A549 (cell line): ENCODE measurements at regions of chr4 and their contacts with region 1.

Region 1: GRCh38 chr4:127732613-127733328 is 2.6 kb downstream of the SLC25A31 start:
- DNase-seq: peak; percentile 33 to 38
- ATAC-seq: peak; percentile 85 to 94
- H3K4me3 ChIP-seq: no peak overlapping the region
- H3K27ac ChIP-seq: no peak overlapping the region
- H3K4me1 ChIP-seq: no peaks in the 10 kb centered on the region
- CTCF ChIP-seq: peak; percentile 60
- EP300 ChIP-seq: no peak
- POLR2A ChIP-seq: no peak
- RAD21 ChIP-seq: peak; percentile 74 to 77

Region 2: GRCh38 chr4:127347936-127348335 is 384.8 kb before region 1 on chr4:
- CTCF ChIA-PET with region 1: no interaction called
- POLR2A ChIA-PET with region 1: no interaction called
- DNase-seq: no peak
- ATAC-seq: no peak
- H3K4me3 ChIP-seq: no peak overlapping the region
- H3K27ac ChIP-seq: no peak overlapping the region
- H3K4me1 ChIP-seq: no peaks in the 10 kb centered on the region
- CTCF ChIP-seq: no peak
- EP300 ChIP-seq: no peak
- POLR2A ChIP-seq: no peak
- RAD21 ChIP-seq: no peak

Region 3: DNA sequence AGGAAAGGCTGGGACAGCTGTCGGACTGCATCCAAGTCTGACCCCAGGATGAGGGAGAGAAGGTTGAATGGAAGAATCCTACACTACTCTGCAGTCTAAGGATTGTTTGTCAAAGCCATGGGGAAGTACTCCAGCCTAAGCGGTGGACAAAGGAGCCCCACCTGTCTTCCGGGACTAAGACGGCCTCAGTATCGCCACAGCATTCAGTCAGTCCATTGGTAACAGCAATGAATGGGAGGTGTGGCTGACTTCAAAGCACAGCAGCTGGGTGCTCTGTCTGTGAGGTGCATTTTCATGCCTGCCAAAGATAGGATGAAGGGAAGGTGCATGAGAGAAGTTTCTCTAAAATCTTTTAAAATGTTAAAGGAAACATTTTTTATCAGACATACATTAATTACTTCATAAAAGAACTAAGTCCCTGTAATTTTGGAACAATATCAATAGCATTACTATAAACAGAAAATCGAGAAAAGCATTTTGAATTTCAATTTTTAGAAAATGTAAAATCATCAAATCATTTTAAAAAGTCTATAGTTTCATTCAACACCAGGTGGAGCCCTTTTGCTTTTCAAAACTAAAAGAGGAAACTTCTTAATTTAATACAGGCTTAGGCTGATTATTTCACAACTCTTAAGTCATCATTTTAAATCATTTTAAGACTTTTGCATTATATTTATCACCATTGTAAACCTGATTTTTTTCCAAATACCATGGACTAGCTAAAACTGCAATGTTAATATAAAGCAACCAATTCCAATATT is 127.6 kb before region 1 on chr4:
- CTCF ChIA-PET with region 1: interaction called, 180 read pairs
- POLR2A ChIA-PET with region 1: no interaction called
- DNase-seq: peak in 1 of 2 experiments; percentile 20
- ATAC-seq: peak; percentile 30 to 47; a peak in 3 of 6 replicates
- H3K4me3 ChIP-seq: no peak overlapping the region
- H3K27ac ChIP-seq: no peak overlapping the region
- H3K4me1 ChIP-seq: no peaks in the 10 kb centered on the region
- CTCF ChIP-seq: peak; percentile 62; the same call in 2 of the 3 replicates
- EP300 ChIP-seq: no peak
- POLR2A ChIP-seq: no peak
- RAD21 ChIP-seq: peak; percentile 64 to 75

Region 4: GRCh38 chr4:127616898-127617297 is 115.9 kb before region 1 on chr4:
- CTCF ChIA-PET with region 1: interaction called, 25 read pairs
- POLR2A ChIA-PET with region 1: no interaction called
- DNase-seq: no peak
- ATAC-seq: no peak
- H3K4me3 ChIP-seq: no peak overlapping the region
- H3K27ac ChIP-seq: no peak overlapping the region
- H3K4me1 ChIP-seq: no peaks in the 10 kb centered on the region
- CTCF ChIP-seq: no peak
- EP300 ChIP-seq: no peak
- POLR2A ChIP-seq: no peak
- RAD21 ChIP-seq: no peak

Region 5: DNA sequence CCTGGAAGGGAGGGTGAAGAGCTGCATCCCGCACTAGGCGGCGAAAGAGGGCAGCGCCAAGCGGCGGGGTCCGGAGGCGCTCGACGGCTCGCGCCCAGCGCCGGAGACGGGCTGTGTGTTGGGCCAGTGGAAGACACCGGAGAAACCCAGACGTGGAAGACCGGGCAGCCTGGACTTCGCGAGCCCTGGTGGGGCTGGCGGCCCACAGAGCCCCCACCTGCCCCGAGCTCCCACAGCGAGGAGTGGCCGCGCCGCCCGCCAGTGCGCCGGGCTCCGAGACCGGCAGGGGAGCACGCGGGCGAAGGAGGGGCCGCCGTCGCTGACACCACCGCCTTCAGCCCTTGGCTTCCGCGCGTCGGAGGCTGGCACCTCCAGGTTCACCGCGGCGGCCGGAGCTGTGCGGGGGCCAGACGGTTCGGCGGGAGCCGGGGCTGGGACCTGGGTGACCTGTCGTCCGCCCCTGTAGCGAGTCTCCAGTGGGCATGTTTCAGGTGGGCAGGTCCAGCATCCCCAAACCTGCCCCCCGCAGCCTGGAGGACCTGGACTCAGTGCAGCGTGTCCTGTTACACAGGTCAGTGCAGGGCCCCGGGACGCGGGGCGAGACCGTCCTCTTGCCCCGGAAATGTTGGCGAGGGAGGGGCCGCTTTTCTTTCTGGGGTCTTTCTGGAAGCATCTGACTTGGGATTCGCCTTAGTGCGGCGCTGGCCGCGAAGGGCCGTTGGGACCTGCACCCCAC is 109.7 kb before region 1 on chr4:
- CTCF ChIA-PET with region 1: interaction called, 14 read pairs
- POLR2A ChIA-PET with region 1: no interaction called
- DNase-seq: peak; percentile 69 to 71
- ATAC-seq: peak; percentile 98
- H3K4me3 ChIP-seq: peak overlapping the region; percentile 75
- H3K27ac ChIP-seq: peak overlapping the region; percentile 51 to 78; a peak in 5 of 6 replicates
- H3K4me1 ChIP-seq: peaks cover 3% of the 10 kb centered on the region; the same call in 1 of the 3 replicates
- CTCF ChIP-seq: no peak
- EP300 ChIP-seq: no peak
- POLR2A ChIP-seq: no peak
- RAD21 ChIP-seq: peak in 1 of 2 experiments; percentile 38; a peak in 3 of 5 replicates

Region 6: GRCh38 chr4:127870688-127871087 is 137.9 kb after region 1 on chr4:
- CTCF ChIA-PET with region 1: no interaction called
- POLR2A ChIA-PET with region 1: no interaction called
- DNase-seq: peak in 1 of 2 experiments; percentile 6
- ATAC-seq: peak in 1 of 2 experiments; percentile 46; a peak in 2 of 6 replicates
- H3K4me3 ChIP-seq: no peak overlapping the region
- H3K27ac ChIP-seq: no peak overlapping the region
- H3K4me1 ChIP-seq: peaks cover 10% of the 10 kb centered on the region; the same call in 2 of the 3 replicates
- CTCF ChIP-seq: no peak
- EP300 ChIP-seq: no peak
- POLR2A ChIP-seq: no peak
- RAD21 ChIP-seq: no peak